HCT116 (cell line): ENCODE measurements at regions of chr1 and their contacts with region 1.

Region 1: GRCh38 chr1:176779992-176780328 is 317.0 kb downstream of the PAPPA2 start:
- DNase-seq: no peak
- ATAC-seq: no peak
- H3K4me3 ChIP-seq: no peak overlapping the region
- H3K27ac ChIP-seq: no peak overlapping the region
- H3K4me1 ChIP-seq: no peaks in the 10 kb centered on the region
- H3K27me3 ChIP-seq: peaks cover 15% of the 10 kb centered on the region; the same call in 1 of the 2 replicates
- CTCF ChIP-seq: no peak
- POLR2A ChIP-seq: no peak
- RAD21 ChIP-seq: no peak

Region 2: GRCh38 chr1:176996456-176997090 is 216.6 kb after region 1 on chr1:
- CTCF ChIA-PET with region 1: no interaction called
- POLR2A ChIA-PET with region 1: no interaction called
- RAD21 ChIA-PET with region 1: no interaction called
- intact Hi-C with region 1: loop called (anchors 5 kb)
- DNase-seq: no peak
- ATAC-seq: no peak
- H3K4me3 ChIP-seq: no peak overlapping the region
- H3K27ac ChIP-seq: no peak overlapping the region
- H3K4me1 ChIP-seq: no peaks in the 10 kb centered on the region
- H3K27me3 ChIP-seq: peaks cover 4% of the 10 kb centered on the region; the same call in 1 of the 2 replicates
- CTCF ChIP-seq: no peak
- POLR2A ChIP-seq: no peak
- RAD21 ChIP-seq: no peak